ENCODE measurements at regions of chr20 and their contacts with region 1.

Region 1: DNA sequence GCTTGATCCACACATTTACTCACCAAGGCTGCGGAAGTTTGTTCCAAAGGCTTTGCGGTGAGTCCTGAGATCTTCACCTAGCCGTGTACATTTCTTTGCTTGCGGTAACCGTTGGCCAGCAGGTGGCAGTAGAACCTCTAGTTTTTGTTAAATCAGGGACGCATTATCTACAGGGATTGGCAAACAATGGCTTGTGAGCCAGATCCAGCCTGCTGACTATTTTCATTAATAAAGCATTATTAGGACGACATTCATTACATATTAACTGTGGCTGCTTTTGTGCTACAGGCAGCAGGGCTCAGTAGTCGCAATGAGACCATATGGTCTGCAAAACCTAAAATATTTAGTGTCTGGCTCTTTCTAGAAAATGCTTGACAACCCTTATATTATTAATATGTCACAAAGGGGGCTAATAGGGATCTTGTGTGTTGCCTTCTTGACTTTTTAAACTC is 174.1 kb downstream of the DOK5 start:
- DNase-seq: no peak
- H3K4me3 ChIP-seq: no peak overlapping the region
- H3K27ac ChIP-seq: no peak overlapping the region
- H3K4me1 ChIP-seq: no peaks in the 10 kb centered on the region
- H3K27me3 ChIP-seq: no peaks in the 10 kb centered on the region
- CTCF ChIP-seq: peak in 2 of 3 experiments; percentile 36 to 71
- POLR2A ChIP-seq: no peak

Region 2: GRCh38 chr20:54093423-54094267 is 555.9 kb before region 1 on chr20:
- intact Hi-C with region 1: loop called (anchors 10 kb)
- DNase-seq: no peak
- H3K4me3 ChIP-seq: no peak overlapping the region
- H3K27ac ChIP-seq: no peak overlapping the region
- H3K4me1 ChIP-seq: no peaks in the 10 kb centered on the region
- H3K27me3 ChIP-seq: no peaks in the 10 kb centered on the region
- CTCF ChIP-seq: no peak
- POLR2A ChIP-seq: no peak

Region 3: DNA sequence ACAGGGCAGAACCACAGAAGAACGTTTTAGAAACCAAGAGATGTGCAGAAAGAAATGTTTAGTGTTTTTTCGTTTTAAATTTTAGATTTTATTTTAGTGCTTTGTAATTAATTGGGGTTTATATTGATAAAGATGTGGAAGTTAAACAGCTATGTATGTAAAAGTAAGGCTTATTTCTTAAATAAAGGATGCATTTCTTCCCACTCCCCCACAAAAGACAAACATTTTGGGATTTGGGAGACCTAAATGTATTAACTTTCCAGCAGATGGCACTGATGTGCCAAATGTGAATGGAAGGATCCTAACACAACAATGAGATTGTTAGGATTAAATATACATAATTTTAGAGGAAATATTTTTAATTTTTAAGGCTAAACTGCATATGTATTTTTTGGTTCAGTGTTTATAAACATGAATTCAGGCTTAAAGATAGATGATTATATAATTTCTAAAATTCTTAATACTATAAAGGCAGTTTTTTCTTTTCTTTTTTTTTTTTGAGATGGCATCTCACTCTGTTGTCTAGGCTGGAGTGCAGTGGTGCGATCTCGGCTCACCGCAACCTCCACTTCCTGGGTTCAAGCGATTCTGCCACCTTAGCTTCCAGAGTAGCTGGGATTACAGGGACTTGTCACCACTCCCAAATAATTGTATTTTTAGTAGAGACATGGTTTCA is 429.6 kb before region 1 on chr20:
- intact Hi-C with region 1: loop called (anchors 5 kb)
- DNase-seq: no peak
- H3K4me3 ChIP-seq: no peak overlapping the region
- H3K27ac ChIP-seq: no peak overlapping the region
- H3K4me1 ChIP-seq: no peaks in the 10 kb centered on the region
- H3K27me3 ChIP-seq: no peaks in the 10 kb centered on the region
- CTCF ChIP-seq: no peak
- POLR2A ChIP-seq: no peak

Region 4: DNA sequence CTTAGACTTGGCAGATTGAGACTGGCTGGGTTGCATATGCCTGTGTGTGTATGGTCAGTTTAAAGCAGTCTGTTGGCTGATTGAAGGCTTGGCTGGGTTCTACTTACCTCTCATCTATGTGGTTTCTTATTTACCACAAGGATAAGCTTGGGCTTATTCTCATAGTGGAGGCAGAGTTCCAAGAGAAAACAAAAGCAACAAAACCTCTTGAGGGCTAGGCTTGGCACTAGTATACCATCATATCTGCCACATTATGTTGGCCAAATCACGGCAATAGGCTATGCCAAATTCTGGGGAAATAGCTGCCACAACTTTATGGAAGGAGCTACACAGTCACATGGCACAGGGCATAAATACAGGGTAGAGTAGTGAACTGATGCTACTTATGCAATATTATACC is 641.7 kb after region 1 on chr20:
- intact Hi-C with region 1: no loop called
- DNase-seq: no peak
- H3K4me3 ChIP-seq: no peak overlapping the region
- H3K27ac ChIP-seq: no peak overlapping the region
- H3K4me1 ChIP-seq: no peaks in the 10 kb centered on the region
- H3K27me3 ChIP-seq: no peaks in the 10 kb centered on the region
- CTCF ChIP-seq: no peak
- POLR2A ChIP-seq: no peak